GM12878 (cell line): ENCODE measurements at regions of chr1 and their contacts with region 1.

Region 1: DNA sequence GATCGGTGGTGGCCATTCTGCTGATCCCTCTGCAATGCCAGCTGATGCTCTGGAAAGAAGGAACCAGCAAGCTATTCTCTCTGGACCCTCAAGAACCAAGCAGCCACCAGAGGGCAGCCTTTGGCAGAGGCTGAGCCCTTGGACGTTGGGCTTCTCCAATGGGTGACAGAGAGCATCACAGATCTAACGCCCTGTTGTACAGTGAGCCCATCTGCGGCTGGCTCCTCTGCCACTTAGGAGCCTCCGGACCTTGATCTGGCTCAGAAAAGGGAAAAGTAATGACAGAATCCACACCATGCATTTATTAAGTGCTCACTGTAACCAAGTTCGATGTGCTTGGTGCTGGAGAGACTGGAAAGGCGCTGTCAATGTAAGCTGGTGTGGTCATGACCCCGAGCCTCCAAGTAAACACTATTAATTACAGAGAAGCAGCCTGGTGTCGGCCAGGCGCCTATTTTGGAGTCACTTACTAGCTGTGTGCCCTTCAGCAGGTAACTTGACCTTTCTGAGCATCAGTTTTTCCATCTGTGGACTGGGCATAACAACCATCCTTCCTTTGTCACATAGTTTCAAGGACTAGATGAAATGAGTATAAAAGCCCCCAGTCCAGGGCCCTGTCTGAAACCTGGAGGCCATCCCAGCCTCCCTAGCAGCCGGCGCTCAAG is 34.9 kb downstream of the ECE1 start:
- DNase-seq: peak; percentile 23
- ATAC-seq: peak; percentile 98
- H3K4me3 ChIP-seq: no peak overlapping the region
- H3K27ac ChIP-seq: no peak overlapping the region
- H3K4me1 ChIP-seq: no peaks in the 10 kb centered on the region
- H3K27me3 ChIP-seq: no peaks in the 10 kb centered on the region
- CTCF ChIP-seq: peak; percentile 82 to 86 (median 84)
- EP300 ChIP-seq: no peak
- POLR2A ChIP-seq: no peak
- RAD21 ChIP-seq: peak; percentile 98

Region 2: GRCh38 chr1:21232044-21232443 is 23.4 kb before region 1 on chr1:
- CTCF ChIA-PET with region 1: interaction called, 27 read pairs
- POLR2A ChIA-PET with region 1: no interaction called
- RAD21 ChIA-PET with region 1: interaction called, 14 read pairs
- SMC1A ChIA-PET with region 1: interaction called, 14 read pairs
- in situ Hi-C with region 1: no loop called
- intact Hi-C with region 1: no loop called
- DNase-seq: no peak
- ATAC-seq: peak; percentile 77
- H3K4me3 ChIP-seq: no peak overlapping the region
- H3K27ac ChIP-seq: no peak overlapping the region
- H3K4me1 ChIP-seq: no peaks in the 10 kb centered on the region
- H3K27me3 ChIP-seq: no peaks in the 10 kb centered on the region
- CTCF ChIP-seq: peak; percentile 59 to 75 (median 73)
- EP300 ChIP-seq: no peak
- POLR2A ChIP-seq: no peak
- RAD21 ChIP-seq: peak; percentile 82

Region 3: DNA sequence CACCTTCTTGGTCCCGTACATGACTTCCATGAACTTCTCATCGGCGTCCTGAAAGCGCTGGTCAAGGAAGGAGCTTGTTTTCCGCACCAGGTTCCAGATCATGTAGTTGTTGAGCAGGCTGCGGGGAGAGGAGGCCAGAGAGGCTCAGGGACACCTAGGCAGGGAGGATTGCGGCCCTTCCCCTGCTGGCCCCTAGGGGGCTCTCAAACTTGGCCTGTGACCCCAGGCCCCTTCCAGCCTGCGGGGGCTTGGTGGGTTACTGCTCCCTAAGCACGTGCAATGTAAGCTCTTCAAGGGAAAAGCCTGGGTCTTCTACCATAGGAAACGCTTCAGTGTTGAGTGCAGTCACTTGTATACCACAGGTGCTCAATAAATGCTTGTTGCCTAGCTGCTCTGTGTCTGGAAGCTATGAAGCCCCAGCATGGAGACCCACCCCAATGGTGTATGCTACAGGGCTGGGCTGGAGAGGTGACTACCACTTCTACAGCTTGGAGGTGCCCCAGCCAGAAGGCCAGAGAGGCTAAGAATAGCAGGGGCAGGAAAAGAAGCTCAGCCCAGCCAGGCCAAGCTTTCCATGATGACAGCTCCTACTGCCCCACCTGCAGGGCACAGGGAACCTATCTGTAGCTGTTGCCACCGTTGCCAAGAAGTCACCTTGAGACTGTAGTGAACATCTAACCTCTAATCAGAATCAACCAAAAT is 10.3 kb before region 1 on chr1:
- CTCF ChIA-PET with region 1: interaction called, 13 read pairs
- POLR2A ChIA-PET with region 1: no interaction called
- RAD21 ChIA-PET with region 1: interaction called, 3 read pairs
- SMC1A ChIA-PET with region 1: interaction called, 3 read pairs
- in situ Hi-C with region 1: no loop called
- intact Hi-C with region 1: no loop called
- DNase-seq: no peak
- ATAC-seq: peak; percentile 53; the same call in 2 of the 3 replicates
- H3K4me3 ChIP-seq: no peak overlapping the region
- H3K27ac ChIP-seq: no peak overlapping the region
- H3K4me1 ChIP-seq: no peaks in the 10 kb centered on the region
- H3K27me3 ChIP-seq: no peaks in the 10 kb centered on the region
- CTCF ChIP-seq: peak in 2 of 3 experiments; percentile 44 to 52; a peak in 4 of 6 replicates
- EP300 ChIP-seq: no peak
- POLR2A ChIP-seq: no peak
- RAD21 ChIP-seq: no peak

Region 4: DNA sequence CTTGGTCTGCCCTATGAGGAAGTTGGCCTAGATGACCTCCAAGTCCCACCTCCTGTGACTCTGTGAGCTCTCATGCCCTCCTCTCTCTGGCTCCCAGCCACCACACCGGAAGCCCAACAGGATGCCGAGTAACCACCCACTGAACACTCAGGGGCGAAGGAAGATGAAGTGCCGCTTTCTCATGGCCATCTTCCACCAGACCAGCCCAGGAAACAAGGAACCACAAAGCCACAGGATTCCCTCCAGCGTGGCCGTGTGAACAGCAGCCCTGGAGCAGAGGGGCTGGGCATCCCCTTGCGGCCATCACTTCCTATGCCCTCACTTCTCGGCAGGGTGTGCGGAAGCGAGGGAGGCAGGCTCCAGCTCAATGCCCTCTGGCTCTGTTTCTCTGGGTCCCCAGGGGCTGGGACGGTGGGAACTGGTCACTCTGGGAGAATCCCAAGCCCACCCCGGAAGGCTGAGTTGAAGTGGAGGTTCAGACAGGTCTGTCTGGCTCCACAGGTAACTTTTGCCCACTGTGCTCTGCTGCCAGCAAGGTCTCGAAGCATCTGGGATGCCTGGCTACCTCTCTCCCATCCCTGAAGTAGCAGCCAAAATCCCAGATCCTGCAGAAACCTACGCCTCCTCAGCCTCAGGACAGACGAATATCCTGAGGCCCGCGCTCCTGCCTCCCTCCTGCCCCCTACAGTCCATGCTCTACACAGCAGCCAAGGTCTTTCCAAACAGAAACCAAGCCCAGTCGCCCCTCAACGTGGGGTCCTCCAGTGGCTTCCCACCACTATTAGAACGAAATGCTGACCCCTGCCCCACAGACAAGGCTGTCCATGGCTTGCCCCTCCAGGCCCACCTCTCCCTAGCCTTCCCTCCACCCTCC is 79.0 kb after region 1 on chr1:
- CTCF ChIA-PET with region 1: interaction called, 17 read pairs
- POLR2A ChIA-PET with region 1: interaction called, 3 read pairs
- RAD21 ChIA-PET with region 1: interaction called, 23 read pairs
- SMC1A ChIA-PET with region 1: interaction called, 16 read pairs
- in situ Hi-C with region 1: no loop called
- intact Hi-C with region 1: no loop called
- DNase-seq: peak; percentile 91
- ATAC-seq: peak; percentile 92
- H3K4me3 ChIP-seq: peak overlapping the region; percentile 55; the same call in 1 of the 2 replicates
- H3K27ac ChIP-seq: peak overlapping the region; percentile 87
- H3K4me1 ChIP-seq: peaks cover 46% of the 10 kb centered on the region
- H3K27me3 ChIP-seq: no peaks in the 10 kb centered on the region
- CTCF ChIP-seq: peak; percentile 72 to 87 (median 76)
- EP300 ChIP-seq: peak in 1 of 2 experiments; percentile 11; a peak in 1 of 4 replicates
- POLR2A ChIP-seq: peak; percentile 56
- RAD21 ChIP-seq: peak; percentile 63

Region 5: GRCh38 chr1:21472861-21473260 is 217.5 kb after region 1 on chr1:
- CTCF ChIA-PET with region 1: no interaction called
- POLR2A ChIA-PET with region 1: no interaction called
- RAD21 ChIA-PET with region 1: no interaction called
- SMC1A ChIA-PET with region 1: no interaction called
- in situ Hi-C with region 1: no loop called
- intact Hi-C with region 1: no loop called
- DNase-seq: no peak
- ATAC-seq: no peak
- H3K4me3 ChIP-seq: no peak overlapping the region
- H3K27ac ChIP-seq: no peak overlapping the region
- H3K4me1 ChIP-seq: no peaks in the 10 kb centered on the region
- H3K27me3 ChIP-seq: no peaks in the 10 kb centered on the region
- CTCF ChIP-seq: no peak
- EP300 ChIP-seq: no peak
- POLR2A ChIP-seq: no peak
- RAD21 ChIP-seq: no peak